Kidney (tissue), 22 donors: ENCODE measurements at regions of chr11 and their contacts with region 1.

Region 1: GRCh38 chr11:71298761-71299181 is 46.4 kb upstream of the SHANK2 start:
- DNase-seq: peak in 1 of 5 donors; percentile 21
- H3K4me3 ChIP-seq: no peak overlapping the region
- H3K27ac ChIP-seq: no peak overlapping the region
- H3K4me1 ChIP-seq: no peaks in the 10 kb centered on the region
- H3K27me3 ChIP-seq: no peaks in the 10 kb centered on the region
- CTCF ChIP-seq: no peak

Region 2: DNA sequence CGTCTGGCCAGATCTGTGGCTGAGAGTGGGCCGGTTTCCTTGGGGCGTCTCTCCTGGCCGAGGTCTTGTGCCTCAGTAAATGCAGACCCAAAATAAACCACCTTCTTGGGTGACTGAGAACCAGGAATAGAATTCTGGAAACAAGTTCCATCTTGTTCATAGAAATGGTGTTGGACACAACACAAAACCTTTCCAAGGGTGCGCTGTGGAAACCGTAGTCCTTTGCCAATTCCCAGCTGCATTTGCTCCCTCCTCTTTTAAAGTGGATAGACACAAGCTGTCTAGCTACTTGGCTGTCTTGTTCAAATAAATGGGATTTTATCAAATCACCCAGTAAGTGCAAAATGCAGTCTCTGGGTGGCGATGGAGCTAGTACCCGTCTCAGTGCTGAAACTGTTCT is 346.6 kb before region 1 on chr11:
- intact Hi-C with region 1: no loop called
- DNase-seq: peak in 1 of 5 donors; percentile 26
- H3K4me3 ChIP-seq: no peak overlapping the region
- H3K27ac ChIP-seq: no peak overlapping the region
- H3K4me1 ChIP-seq: peaks cover 0 to 17% (median 11%) of the 10 kb centered on the region in 3 donors
- H3K27me3 ChIP-seq: no peaks in the 10 kb centered on the region
- CTCF ChIP-seq: no peak

Region 3: DNA sequence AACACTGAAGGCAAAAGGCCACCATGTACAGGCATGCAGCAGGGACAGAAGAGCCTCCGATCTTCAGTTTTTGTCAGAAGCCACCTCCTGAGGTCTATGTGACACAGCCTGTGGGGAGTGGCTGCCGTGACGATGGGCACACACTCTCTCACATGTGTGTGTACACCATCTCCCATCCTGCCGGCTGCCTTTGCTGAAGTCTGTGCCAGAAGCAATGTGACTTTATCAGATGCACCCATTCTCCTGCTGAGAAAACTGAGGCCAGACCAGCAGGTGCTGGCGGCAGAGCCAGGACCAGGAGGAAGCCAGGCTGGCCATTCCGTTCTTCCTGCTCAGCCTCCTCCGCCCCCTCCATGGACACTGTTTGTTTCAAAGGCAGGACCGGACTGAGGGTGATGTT is 63.1 kb before region 1 on chr11:
- intact Hi-C with region 1: loop called (anchors 10 kb)
- DNase-seq: peak in 1 of 5 donors; percentile 24
- H3K4me3 ChIP-seq: no peak overlapping the region
- H3K27ac ChIP-seq: no peak overlapping the region
- H3K4me1 ChIP-seq: peaks cover 0 to 14% (median 7%) of the 10 kb centered on the region in 3 donors
- H3K27me3 ChIP-seq: no peaks in the 10 kb centered on the region
- CTCF ChIP-seq: no peak

Region 4: DNA sequence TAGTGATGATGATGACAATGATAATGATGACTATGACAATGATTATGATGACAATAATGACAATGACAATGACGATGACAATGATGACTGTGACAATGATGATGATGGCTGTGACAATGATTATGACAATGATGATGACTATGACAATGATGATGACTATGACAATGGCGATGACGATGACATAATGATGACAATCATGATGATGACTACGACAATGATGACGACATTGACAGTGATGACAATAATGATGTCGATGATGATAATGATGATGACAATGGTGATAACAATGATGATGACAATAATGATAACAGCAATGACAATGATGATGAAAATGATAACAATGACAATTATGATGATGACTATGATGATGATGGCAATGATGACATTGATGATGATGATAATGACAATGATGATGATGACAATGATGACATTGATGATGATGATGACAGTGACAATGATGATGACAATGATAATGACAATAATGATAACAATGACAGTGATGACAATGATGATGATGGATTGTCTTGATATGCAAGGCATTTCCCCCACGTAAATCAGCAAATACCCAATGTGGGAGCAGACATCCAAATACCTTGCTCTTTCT is 111.7 kb after region 1 on chr11:
- intact Hi-C with region 1: no loop called
- DNase-seq: no peak
- H3K4me3 ChIP-seq: no peak overlapping the region
- H3K27ac ChIP-seq: no peak overlapping the region
- H3K4me1 ChIP-seq: no peaks in the 10 kb centered on the region
- H3K27me3 ChIP-seq: no peaks in the 10 kb centered on the region
- CTCF ChIP-seq: no peak

Region 5: DNA sequence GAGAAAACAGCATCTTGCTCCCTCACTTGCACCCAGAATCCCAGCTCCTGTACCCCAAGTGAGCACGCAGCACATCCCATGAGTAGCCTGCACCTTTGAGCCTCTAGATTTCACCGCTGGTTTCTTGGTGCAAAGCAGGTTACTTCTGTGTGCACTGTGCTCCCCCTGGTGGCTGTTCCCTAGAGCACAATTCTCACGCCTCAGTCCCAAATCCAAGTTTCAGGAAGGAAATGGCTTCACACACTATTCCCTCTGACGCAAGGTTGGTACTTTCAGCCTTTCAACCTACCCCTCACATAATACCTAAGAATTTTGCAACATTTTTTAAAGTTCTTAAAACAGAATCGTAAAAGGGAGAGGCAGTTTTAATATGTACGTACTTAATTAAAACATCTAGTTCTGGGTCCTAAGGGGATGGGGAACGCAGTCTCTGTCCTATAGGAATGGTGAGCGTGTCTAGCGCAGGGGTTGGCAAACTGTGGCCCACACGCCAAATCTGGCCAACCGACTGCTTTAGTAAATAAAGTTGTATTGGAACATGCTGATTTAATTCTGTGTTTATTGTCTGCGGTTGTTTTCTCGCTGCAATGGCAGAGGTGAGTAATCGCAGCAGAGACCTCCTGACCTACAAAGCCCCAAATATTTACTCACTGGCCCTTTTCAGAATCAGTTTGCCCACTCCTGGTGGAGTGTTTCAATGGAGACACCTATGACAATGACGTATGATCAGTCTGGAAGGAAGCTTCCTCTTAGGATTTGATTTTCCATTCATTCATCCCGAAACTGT is 121.9 kb after region 1 on chr11:
- intact Hi-C with region 1: no loop called
- DNase-seq: peak in 4 of 5 donors; percentile 47 to 60 (median 56)
- H3K4me3 ChIP-seq: no peak overlapping the region
- H3K27ac ChIP-seq: no peak overlapping the region
- H3K4me1 ChIP-seq: no peaks in the 10 kb centered on the region
- H3K27me3 ChIP-seq: no peaks in the 10 kb centered on the region
- CTCF ChIP-seq: peak; percentile 47